ENCODE measurements at regions of chr14 and their contacts with region 1.

Region 1: GRCh38 chr14:99884834-99885648 is 91.8 kb downstream of the EML1 start:
- DNase-seq: no peak
- ATAC-seq: peak; percentile 79

Region 2: GRCh38 chr14:99733540-99734405 is 151.3 kb before region 1 on chr14:
- intact Hi-C with region 1: loop called (anchors 2 kb)
- DNase-seq: peak; percentile 73
- ATAC-seq: peak; percentile 14

Region 3: DNA sequence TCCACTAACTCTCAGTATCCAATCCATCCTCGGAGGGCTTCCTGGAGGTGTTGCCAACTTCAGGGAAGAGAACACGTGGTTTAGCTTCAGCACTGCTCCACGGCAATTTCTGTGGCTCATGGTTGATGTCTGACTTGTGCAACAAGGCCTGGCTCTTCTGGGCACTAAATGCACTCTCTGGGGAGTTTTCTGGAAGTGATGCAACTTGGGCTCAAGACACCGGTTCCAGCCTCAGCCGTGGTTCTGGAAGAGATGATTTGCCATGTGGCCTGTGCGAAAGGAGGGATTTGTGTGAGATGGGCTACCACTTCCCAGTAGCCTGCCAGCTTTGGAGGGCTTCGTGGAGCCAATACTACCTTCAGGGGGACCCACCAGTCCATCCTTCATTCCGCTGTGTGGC is 1137.1 kb after region 1 on chr14:
- intact Hi-C with region 1: no loop called
- DNase-seq: peak; percentile 18
- ATAC-seq: no peak